Endothelial cell of umbilical vein (primary cell): ENCODE measurements at regions of chr10 and their contacts with region 1.

Region 1: DNA sequence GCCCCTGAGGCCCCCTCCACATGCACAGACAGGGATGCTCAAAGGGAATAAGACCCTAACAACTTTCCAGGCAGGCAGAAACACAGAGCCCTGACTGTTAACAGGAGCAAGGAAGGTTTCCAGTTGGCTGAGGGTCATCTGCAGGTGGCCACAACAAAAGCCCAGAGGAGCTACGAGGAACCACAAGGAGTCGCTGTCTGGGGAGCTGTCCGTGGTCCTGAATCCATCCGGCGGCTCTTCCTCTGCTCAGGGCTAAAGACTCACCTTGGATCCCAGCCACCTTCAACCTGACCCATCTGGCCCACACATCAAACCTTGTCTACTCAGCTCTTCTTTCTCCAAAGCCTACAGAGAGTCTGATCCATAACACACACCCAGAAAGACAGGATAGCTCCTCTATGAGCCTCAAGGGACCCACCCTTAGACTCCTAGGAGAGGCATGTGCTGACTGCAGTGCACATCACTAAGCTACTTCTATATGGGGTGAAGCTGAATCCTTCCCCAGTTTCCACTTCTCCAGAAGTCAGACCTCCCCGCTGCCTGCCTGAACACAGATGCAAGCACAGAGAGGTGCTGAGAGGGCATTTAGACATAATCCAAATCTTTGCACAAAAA is 104.0 kb downstream of the SLIT1 start:
- DNase-seq: peak; percentile 57
- H3K4me3 ChIP-seq: no peak overlapping the region
- H3K27ac ChIP-seq: no peak overlapping the region
- H3K4me1 ChIP-seq: no peaks in the 10 kb centered on the region
- H3K27me3 ChIP-seq: peaks cover 0 to 6% of the 10 kb centered on the region in 2 experiments
- CTCF ChIP-seq: peak; percentile 85 to 97
- POLR2A ChIP-seq: no peak

Region 2: DNA sequence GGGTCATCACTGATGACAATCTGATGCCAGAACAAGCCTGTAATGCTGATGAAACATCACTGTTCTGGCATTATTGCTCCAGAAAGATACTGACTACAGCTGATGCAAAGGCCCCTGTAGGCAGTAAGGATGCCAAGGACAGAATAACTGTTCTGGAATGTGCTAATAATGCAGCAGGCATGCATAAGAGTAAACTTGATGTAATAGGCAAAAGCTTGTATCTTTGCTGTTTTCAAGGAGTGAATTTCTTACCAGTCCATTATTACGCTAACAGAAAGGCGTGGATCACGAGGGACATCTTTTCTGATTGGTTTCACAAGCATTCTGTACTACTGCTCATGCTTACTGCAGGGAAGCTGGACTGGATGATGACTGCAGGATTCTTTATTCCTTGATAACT is 230.9 kb before region 1 on chr10:
- CTCF ChIA-PET with region 1: no interaction called
- POLR2A ChIA-PET with region 1: no interaction called
- dilution Hi-C with region 1: no loop called
- intact Hi-C with region 1: no loop called
- DNase-seq: no peak
- H3K4me3 ChIP-seq: no peak overlapping the region
- H3K27ac ChIP-seq: no peak overlapping the region
- H3K4me1 ChIP-seq: no peaks in the 10 kb centered on the region
- H3K27me3 ChIP-seq: no peaks in the 10 kb centered on the region
- CTCF ChIP-seq: no peak
- POLR2A ChIP-seq: no peak

Region 3: DNA sequence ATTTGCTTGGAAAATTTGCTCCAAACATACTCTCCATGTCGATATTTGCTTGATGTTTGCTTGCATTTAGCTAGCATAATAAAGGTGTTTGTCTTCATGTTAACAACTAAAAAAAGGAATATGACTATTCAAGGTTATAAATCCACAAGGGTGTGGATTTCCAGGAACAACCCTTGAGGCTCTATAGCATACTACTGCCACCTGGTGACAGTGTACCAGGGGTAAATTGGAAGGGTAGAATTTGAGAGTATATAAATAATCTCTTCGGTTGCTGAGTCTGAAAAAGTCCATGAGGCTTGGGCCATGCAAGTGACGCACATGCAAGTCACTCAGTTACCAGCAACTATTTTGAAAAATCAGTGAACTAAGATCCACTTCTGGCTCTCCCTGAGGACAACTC is 35.6 kb after region 1 on chr10:
- CTCF ChIA-PET with region 1: interaction called, 19 read pairs
- POLR2A ChIA-PET with region 1: no interaction called
- dilution Hi-C with region 1: no loop called
- intact Hi-C with region 1: loop called (anchors 2 kb)
- DNase-seq: peak; percentile 17
- H3K4me3 ChIP-seq: no peak overlapping the region
- H3K27ac ChIP-seq: no peak overlapping the region
- H3K4me1 ChIP-seq: no peaks in the 10 kb centered on the region
- H3K27me3 ChIP-seq: peaks cover 2 to 5% of the 10 kb centered on the region in 2 experiments
- CTCF ChIP-seq: peak in 1 of 2 donors; percentile 38
- POLR2A ChIP-seq: no peak

Region 4: DNA sequence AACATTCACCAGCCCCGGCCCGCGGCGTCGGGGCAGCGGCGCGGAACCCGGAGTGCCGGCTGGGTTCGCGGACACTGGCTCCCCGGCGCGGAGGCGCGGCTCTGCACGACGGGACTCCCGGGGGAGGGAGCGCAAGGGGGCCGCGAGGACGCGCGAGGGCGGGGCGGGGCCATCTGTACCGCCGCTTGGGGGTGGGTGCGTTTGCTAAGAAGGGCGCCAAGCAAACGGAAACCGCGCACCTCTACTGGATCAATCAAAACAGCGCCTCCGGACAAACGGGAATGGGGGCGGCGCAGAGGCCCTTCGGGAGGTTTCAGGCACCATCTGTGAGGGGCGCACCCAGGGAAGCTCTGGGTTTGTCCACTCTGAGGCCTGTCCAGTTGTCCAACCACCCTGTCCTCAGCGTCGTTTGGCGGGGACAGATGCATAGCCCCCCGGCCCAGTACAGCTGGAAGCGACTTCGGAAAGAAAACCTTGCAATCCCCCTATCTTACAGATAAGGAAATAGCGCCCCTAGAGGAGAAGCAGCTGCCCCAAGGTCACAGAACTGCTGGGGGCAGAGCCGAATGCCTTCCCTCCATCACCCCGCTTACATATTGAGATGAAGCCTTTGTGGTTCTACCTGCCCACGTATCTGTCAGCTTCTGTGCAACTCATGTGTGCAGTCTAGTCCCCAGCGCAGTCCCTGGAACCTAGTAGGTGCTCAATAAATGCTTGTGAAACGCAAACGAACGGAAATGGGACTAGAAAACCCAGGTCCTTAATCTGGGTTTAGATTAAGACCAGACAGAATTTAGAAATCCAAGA is 114.7 kb after region 1 on chr10:
- CTCF ChIA-PET with region 1: interaction called, 19 read pairs
- POLR2A ChIA-PET with region 1: no interaction called
- dilution Hi-C with region 1: no loop called
- intact Hi-C with region 1: no loop called
- DNase-seq: peak; percentile 48
- H3K4me3 ChIP-seq: peak overlapping the region; percentile 39 to 55 (median 40)
- H3K27ac ChIP-seq: no peak overlapping the region
- H3K4me1 ChIP-seq: no peaks in the 10 kb centered on the region
- H3K27me3 ChIP-seq: peaks cover 15 to 17% of the 10 kb centered on the region in 2 experiments
- CTCF ChIP-seq: peak; percentile 80 to 84
- POLR2A ChIP-seq: no peak

Region 5: DNA sequence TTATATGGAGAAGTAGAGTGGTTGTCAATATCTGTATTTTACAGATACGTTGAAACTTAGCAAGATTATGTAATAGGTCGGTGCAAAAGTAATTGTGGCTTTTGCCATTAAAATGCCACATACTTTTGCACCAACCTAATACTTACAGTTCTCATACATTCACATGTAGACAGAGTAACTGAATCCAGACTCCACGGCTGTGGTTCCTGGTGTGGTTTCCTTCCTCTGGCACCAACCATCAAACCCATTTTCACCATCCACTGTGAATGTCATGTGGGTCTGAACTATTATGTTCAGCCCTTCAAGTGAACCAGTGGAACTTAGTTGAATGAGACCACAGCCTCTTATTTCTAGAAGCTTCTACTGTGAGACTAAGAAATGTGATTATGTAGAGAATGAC is 135.6 kb after region 1 on chr10:
- CTCF ChIA-PET with region 1: interaction called, 397 read pairs
- POLR2A ChIA-PET with region 1: no interaction called
- dilution Hi-C with region 1: no loop called
- intact Hi-C with region 1: no loop called
- DNase-seq: peak; percentile 21
- H3K4me3 ChIP-seq: no peak overlapping the region
- H3K27ac ChIP-seq: peak overlapping the region; percentile 94
- H3K4me1 ChIP-seq: peaks cover 19% of the 10 kb centered on the region
- H3K27me3 ChIP-seq: no peaks in the 10 kb centered on the region
- CTCF ChIP-seq: no peak
- POLR2A ChIP-seq: no peak

Region 6: GRCh38 chr10:97234400-97234799 is 152.7 kb after region 1 on chr10:
- CTCF ChIA-PET with region 1: interaction called, 29 read pairs
- POLR2A ChIA-PET with region 1: no interaction called
- dilution Hi-C with region 1: no loop called
- intact Hi-C with region 1: loop called (anchors 1 kb)
- DNase-seq: peak; percentile 62
- H3K4me3 ChIP-seq: no peak overlapping the region
- H3K27ac ChIP-seq: no peak overlapping the region
- H3K4me1 ChIP-seq: no peaks in the 10 kb centered on the region
- H3K27me3 ChIP-seq: no peaks in the 10 kb centered on the region
- CTCF ChIP-seq: peak; percentile 43 to 50
- POLR2A ChIP-seq: no peak

Region 7: DNA sequence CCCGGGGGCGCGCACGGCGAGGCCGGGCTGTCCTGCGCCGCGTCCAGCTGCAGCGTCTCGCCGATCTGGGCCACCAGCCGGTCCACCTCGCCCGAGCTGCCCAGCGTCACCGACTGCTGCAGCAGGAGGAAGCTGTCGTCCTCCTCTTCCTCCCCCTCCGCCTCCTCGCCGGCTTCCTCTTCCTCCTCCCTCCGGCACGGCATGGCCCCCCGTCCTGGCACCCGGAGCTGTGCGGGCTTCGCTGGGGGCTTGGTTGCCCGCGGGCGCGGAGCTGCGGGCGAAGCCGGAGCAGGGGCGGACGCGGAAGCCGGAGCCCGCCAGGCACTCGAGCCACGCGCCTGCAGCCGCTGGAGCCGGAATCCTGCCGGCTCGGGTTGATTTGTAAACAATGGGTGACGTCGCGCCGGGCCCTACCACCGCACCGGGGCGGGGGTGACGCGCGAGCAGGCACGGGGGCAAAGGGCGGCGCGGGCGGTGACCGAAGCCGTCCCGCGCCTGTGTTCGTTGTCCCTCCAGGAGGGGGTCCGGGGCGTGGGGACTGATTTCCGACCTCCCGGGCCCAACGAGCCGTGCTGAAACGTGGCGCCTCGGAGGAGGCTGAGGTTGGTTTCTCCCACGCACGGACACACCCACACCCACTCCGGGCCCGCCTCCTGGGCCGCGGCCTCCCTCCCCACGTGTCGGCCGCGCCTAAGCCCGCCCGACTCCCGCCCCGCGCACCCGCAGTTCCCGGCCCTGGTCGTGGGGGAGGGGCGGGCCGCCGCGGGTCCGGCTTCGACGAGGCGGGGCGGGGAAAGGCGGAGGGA is 252.8 kb after region 1 on chr10 and contains the start of gene FRAT2:
- CTCF ChIA-PET with region 1: interaction called, 10 read pairs
- POLR2A ChIA-PET with region 1: no interaction called
- dilution Hi-C with region 1: no loop called
- intact Hi-C with region 1: loop called (anchors 10 kb)
- DNase-seq: peak; percentile 91
- H3K4me3 ChIP-seq: peak within 1 kb of the TSS; percentile 39 to 84 (median 80)
- H3K27ac ChIP-seq: peak within 1 kb of the TSS; percentile 100
- H3K4me1 ChIP-seq: peaks cover 11% of the 10 kb centered on the region
- H3K27me3 ChIP-seq: peaks cover 20 to 29% of the 10 kb centered on the region in 2 experiments
- CTCF ChIP-seq: no peak
- POLR2A ChIP-seq: peak; percentile 56
- total RNA-seq, gene FRAT2: 11.3 and 11.5 TPM in 2 replicates

Region 8: DNA sequence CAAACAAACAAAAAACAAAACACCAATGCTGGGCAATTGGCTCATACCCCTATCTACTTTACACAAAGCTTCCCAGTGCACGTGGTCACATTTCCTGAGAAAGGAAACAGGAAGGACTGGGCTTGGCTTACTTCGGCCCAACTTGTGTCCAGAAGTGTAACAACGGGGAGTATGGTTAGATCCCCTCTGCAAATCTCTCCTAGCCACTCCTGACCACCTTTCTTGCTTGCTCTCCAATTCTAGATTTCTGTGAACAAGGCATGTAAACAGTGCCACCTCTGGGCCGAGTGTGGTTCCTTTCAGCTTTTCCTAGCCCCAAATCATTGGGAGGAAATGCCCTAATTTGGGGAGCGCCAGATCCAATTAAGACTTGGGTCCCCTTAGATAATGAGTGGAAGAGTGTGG is 273.8 kb after region 1 on chr10:
- CTCF ChIA-PET with region 1: interaction called, 9 read pairs
- POLR2A ChIA-PET with region 1: no interaction called
- dilution Hi-C with region 1: no loop called
- intact Hi-C with region 1: loop called (anchors 5 kb)
- DNase-seq: peak; percentile 80
- H3K4me3 ChIP-seq: no peak overlapping the region
- H3K27ac ChIP-seq: peak overlapping the region; percentile 36
- H3K4me1 ChIP-seq: peaks cover 13% of the 10 kb centered on the region
- H3K27me3 ChIP-seq: no peaks in the 10 kb centered on the region
- CTCF ChIP-seq: peak; percentile 39 to 45
- POLR2A ChIP-seq: no peak

Region 9: GRCh38 chr10:98062424-98062823 is 980.7 kb after region 1 on chr10:
- CTCF ChIA-PET with region 1: no interaction called
- POLR2A ChIA-PET with region 1: no interaction called
- dilution Hi-C with region 1: no loop called
- intact Hi-C with region 1: no loop called
- DNase-seq: no peak
- H3K4me3 ChIP-seq: no peak overlapping the region
- H3K27ac ChIP-seq: no peak overlapping the region
- H3K4me1 ChIP-seq: no peaks in the 10 kb centered on the region
- H3K27me3 ChIP-seq: no peaks in the 10 kb centered on the region
- CTCF ChIP-seq: no peak
- POLR2A ChIP-seq: no peak